Mammary epithelial cell (primary cell): ENCODE measurements at regions of chr1 and their contacts with region 1.

Region 1: DNA sequence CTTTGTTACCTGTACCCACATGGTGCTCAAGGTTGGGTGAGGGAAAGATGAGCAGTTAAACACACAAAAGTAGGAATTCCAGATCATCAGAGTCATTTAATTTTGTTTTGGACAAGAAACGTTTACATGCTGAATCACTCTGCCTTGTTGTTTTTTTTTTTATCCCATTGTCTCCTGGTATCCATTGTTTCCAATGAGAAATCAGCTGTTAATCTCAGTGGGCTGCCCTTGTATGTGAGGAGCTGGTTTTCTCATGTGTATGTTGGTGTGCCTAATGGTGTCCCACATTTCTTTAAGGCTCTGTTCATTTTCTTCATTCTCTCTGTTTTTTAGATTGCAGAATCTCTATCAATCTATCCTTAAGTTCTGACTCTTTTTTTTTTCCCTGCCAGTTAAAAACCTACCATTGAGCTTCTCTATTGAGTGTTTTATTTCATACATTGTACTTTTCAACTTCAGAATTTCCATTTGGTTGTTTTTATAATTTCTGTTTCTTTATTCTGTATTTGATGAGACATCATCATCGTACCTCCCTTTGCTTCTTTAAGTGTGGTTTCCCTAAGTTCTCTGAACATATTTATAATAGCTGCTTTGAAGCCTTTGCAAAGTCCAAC is 8.8 kb upstream of the OBSCN start:
- DNase-seq: peak; percentile 31
- H3K4me3 ChIP-seq: no peak overlapping the region
- H3K27ac ChIP-seq: no peak overlapping the region
- H3K4me1 ChIP-seq: no peaks in the 10 kb centered on the region
- H3K27me3 ChIP-seq: no peaks in the 10 kb centered on the region
- CTCF ChIP-seq: no peak

Region 2: GRCh38 chr1:227489572-227489971 is 709.5 kb before region 1 on chr1:
- CTCF ChIA-PET with region 1: no interaction called
- dilution Hi-C with region 1: no loop called
- in situ Hi-C with region 1: no loop called
- intact Hi-C with region 1: loop called (anchors 10 kb)
- DNase-seq: no peak
- H3K4me3 ChIP-seq: no peak overlapping the region
- H3K27ac ChIP-seq: no peak overlapping the region
- H3K4me1 ChIP-seq: no peaks in the 10 kb centered on the region
- H3K27me3 ChIP-seq: no peaks in the 10 kb centered on the region
- CTCF ChIP-seq: no peak